ENCODE measurements at regions of chrX and their contacts with region 1.

Region 1: DNA sequence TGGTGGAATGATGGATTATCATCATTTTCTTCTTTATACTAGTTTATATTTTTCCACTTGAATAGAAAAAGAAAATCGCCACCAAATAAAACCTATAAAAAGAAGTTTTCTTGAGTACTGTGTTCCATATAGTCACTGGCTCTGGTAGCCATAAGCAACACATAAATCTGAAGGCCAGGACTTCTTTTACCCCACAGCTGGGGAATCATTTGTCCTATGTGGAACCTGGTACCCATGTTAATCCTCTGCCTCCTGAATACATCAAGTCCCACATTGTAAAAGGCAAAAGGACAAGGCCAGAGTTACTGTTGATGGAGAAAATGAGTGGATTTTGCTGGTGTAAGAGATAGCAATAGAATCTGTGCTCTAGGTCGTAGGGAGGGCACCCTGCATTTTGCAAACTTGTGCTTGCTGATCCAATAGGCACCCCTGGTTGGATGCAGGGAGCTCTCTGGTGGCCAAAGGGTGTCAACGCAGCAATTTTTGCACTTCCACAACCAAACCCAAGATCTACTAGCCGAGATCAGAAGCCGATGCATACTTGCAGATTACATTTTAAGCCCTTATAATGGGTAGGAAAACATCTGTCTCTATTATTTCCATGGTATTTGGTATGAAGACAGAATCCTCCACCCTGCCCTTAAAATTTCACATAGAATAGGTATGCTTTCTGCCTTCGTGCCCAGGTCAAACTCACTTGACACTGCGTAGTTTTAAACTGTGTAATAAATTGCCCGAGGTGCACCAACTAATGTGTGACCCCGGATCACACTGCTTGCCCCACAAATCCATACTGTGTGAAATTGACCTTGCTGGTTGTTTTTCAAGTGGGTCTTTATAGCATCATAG is 146.2 kb upstream of the SCML1 start:
- DNase-seq: peak; percentile 83
- H3K4me3 ChIP-seq: peak overlapping the region in 2 of 4 donors; percentile 8 to 18
- H3K27ac ChIP-seq: peak overlapping the region in 3 of 4 donors; percentile 61 to 76 (median 65)
- H3K4me1 ChIP-seq: peaks cover 0 to 23% (median 2%) of the 10 kb centered on the region in 4 donors
- H3K27me3 ChIP-seq: no peaks in the 10 kb centered on the region
- CTCF ChIP-seq: peak; percentile 37 to 59 (median 52)
- EP300 ChIP-seq: no peak
- POLR2A ChIP-seq: no peak

Region 2: GRCh38 chrX:17553469-17553868 is 37.6 kb before region 1 on chrX:
- intact Hi-C with region 1: loop called (anchors 5 kb)
- DNase-seq: no peak
- H3K4me3 ChIP-seq: no peak overlapping the region
- H3K27ac ChIP-seq: peak overlapping the region in 3 of 4 donors; percentile 60 to 78 (median 72)
- H3K4me1 ChIP-seq: peaks cover 0 to 65% (median 23%) of the 10 kb centered on the region in 4 donors
- H3K27me3 ChIP-seq: no peaks in the 10 kb centered on the region
- CTCF ChIP-seq: no peak
- EP300 ChIP-seq: no peak
- POLR2A ChIP-seq: no peak